ENCODE measurements at regions of chr2 and their contacts with region 1.

Region 1: GRCh38 chr2:219073413-219074129 is 12.8 kb upstream of the IHH start:
- DNase-seq: peak; percentile 64
- H3K4me3 ChIP-seq: no peak overlapping the region
- H3K27ac ChIP-seq: no peak overlapping the region
- H3K4me1 ChIP-seq: no peaks in the 10 kb centered on the region
- CTCF ChIP-seq: peak; percentile 81

Region 2: DNA sequence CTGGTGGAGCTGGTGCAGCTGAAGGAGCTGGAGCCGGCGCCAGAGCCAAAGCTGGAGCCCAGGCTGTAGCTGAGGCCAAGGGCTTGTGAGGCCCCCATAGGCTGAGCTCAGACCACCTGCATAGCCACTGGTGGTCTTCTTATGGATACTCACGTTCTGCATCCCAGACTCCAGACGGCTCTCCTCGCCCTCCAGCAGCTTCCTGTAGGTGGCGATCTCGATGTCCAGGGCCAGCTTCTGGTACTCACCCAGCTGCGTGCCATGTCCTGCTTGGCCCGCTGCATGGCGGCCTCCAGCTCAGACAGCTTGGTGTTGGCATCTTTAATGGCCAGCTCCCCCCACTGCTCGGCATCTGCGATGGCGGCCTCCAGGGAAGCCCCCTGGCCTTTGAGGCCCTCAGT is 120.1 kb before region 1 on chr2:
- CTCF ChIA-PET with region 1: no interaction called
- POLR2A ChIA-PET with region 1: no interaction called
- intact Hi-C with region 1: no loop called
- DNase-seq: no peak
- H3K4me3 ChIP-seq: no peak overlapping the region
- H3K27ac ChIP-seq: no peak overlapping the region
- H3K4me1 ChIP-seq: no peaks in the 10 kb centered on the region
- CTCF ChIP-seq: peak; percentile 41; the same call in 1 of the 2 replicates

Region 3: GRCh38 chr2:219104107-219105035 is 30.8 kb after region 1 on chr2:
- CTCF ChIA-PET with region 1: interaction called, 3 read pairs
- POLR2A ChIA-PET with region 1: no interaction called
- intact Hi-C with region 1: loop called (anchors 5 kb)
- DNase-seq: peak; percentile 49
- H3K4me3 ChIP-seq: no peak overlapping the region
- H3K27ac ChIP-seq: no peak overlapping the region
- H3K4me1 ChIP-seq: no peaks in the 10 kb centered on the region
- CTCF ChIP-seq: peak; percentile 86

Region 4: GRCh38 chr2:219119422-219120043 is 46.0 kb after region 1 on chr2:
- CTCF ChIA-PET with region 1: interaction called, 3 read pairs
- POLR2A ChIA-PET with region 1: no interaction called
- intact Hi-C with region 1: loop called (anchors 1 kb)
- DNase-seq: peak; percentile 62
- H3K4me3 ChIP-seq: no peak overlapping the region
- H3K27ac ChIP-seq: no peak overlapping the region
- H3K4me1 ChIP-seq: no peaks in the 10 kb centered on the region
- CTCF ChIP-seq: peak; percentile 92

Measured in OCI-LY7 (cell line).